HEK293 (cell line): ENCODE measurements at regions of chr6 and their contacts with region 1.

Region 1: DNA sequence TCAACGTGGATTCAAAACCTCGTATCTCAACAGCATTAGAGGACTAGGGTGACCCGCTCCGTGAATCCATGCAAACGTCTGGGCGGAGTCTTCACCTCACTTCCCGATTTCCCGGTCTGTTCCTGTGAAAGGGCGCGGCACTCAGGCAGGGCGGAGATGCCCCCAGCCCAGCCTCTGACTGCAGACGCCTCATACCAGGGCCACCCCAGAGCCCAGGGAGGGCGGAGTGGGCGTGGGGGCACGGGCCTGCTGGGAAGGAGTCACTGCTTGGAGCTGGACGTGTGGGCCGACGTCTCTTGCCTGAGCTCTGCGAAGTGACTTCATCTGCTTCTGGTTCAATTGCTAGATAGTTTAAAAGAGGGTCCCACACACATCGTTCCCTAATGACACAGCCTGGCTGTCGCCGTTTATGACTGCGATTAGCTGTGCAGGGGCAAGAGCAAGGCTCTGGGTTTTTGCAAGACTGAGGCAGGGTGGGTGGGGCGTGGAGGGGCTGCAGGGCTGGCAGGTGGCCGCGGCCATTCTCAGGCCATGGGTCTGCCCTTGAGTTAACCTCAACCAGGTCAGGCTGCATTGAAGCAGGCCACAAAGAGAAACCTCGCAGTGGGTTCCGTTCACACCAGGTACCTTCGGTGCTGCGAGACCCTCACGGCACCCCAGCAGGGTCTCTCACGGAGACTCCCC is 15.0 kb downstream of the SMOC2 start:
- H3K4me3 ChIP-seq: no peak overlapping the region
- H3K27ac ChIP-seq: no peak overlapping the region
- H3K4me1 ChIP-seq: no peaks in the 10 kb centered on the region
- CTCF ChIP-seq: no peak

Region 2: GRCh38 chr6:168433898-168434297 is 22.1 kb before region 1 on chr6:
- CTCF ChIA-PET with region 1: no interaction called
- POLR2A ChIA-PET with region 1: no interaction called
- H3K4me3 ChIP-seq: no peak overlapping the region
- H3K27ac ChIP-seq: no peak overlapping the region
- H3K4me1 ChIP-seq: no peaks in the 10 kb centered on the region
- CTCF ChIP-seq: no peak

Region 3: GRCh38 chr6:168485818-168486217 is 29.8 kb after region 1 on chr6:
- CTCF ChIA-PET with region 1: no interaction called
- POLR2A ChIA-PET with region 1: no interaction called
- H3K4me3 ChIP-seq: no peak overlapping the region
- H3K27ac ChIP-seq: no peak overlapping the region
- H3K4me1 ChIP-seq: no peaks in the 10 kb centered on the region
- CTCF ChIP-seq: no peak

Region 4: GRCh38 chr6:168867247-168868102 is 411.5 kb after region 1 on chr6:
- CTCF ChIA-PET with region 1: no interaction called
- POLR2A ChIA-PET with region 1: interaction called, 11 read pairs
- H3K4me3 ChIP-seq: no peak overlapping the region
- H3K27ac ChIP-seq: no peak overlapping the region
- H3K4me1 ChIP-seq: no peaks in the 10 kb centered on the region
- CTCF ChIP-seq: no peak